ENCODE measurements at regions of chr12 and their contacts with region 1.

Region 1: DNA sequence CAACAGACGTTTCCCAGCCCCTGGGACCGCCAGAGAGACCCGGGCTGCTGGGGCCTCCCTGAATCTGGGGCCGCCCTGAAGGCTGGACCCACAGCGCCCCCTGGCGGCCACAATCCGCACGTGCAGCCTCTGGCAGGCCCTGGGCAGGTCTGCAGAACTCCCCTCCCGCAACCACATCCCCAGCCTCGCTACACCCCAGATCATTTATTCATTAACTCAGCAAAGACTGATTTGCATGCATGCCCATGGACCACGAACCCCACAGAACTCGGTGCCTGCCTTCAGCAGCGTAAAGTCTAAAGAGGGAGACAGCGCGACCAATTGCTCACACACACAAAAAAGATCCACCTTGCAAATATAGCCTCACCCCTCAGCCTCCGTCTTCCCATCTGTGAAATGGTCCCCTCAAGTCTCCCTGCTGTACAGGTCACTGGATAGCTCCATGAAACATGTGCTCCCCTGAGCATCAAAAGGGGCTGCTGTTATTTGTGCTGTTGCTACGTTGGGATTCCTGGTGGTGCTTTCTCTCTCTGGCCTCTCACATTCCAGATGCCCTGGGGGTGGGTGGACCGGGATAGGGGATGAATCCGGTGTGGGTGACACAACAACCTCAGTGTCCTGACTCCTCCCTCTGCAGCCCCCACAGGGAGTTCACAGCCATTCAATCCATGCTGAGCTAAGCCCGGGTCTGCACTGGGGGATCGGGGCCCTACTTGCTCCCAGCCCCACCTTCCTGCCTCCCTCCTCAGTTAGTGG is 96.4 kb downstream of the SCARB1 start:
- DNase-seq: peak; percentile 58
- H3K4me3 ChIP-seq: no peak overlapping the region
- H3K27ac ChIP-seq: no peak overlapping the region
- H3K4me1 ChIP-seq: no peaks in the 10 kb centered on the region
- H3K27me3 ChIP-seq: no peaks in the 10 kb centered on the region
- CTCF ChIP-seq: peak; percentile 95 to 96
- POLR2A ChIP-seq: no peak

Region 2: DNA sequence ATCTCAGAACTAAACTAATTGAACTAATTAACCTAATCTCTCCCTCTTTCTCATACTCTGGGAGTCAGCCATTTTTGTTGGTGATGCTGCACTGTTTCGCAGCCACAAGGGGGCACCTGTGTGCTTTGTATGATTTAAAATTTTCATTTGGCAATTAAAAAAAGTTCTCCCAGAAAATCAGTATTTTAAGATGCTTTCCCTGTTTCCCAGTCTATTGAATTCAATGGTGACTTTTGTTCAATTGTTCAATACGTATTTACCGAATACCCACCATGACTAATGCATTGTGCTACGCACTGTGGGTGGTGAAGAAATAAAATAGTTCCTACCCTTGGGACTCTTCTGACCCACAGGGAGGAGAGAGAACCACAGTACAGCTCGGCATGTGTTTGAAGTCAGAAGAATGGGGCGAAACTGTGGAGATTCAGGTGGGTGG is 730.6 kb before region 1 on chr12:
- CTCF ChIA-PET with region 1: interaction called, 35 read pairs
- POLR2A ChIA-PET with region 1: no interaction called
- dilution Hi-C with region 1: no loop called
- intact Hi-C with region 1: loop called (anchors 1 kb)
- DNase-seq: peak; percentile 60
- H3K4me3 ChIP-seq: no peak overlapping the region
- H3K27ac ChIP-seq: no peak overlapping the region
- H3K4me1 ChIP-seq: peaks cover 6% of the 10 kb centered on the region
- H3K27me3 ChIP-seq: peaks cover 0 to 3% of the 10 kb centered on the region in 2 experiments
- CTCF ChIP-seq: peak; percentile 75 to 81
- POLR2A ChIP-seq: no peak

Region 3: GRCh38 chr12:124347716-124348357 is 419.4 kb before region 1 on chr12:
- CTCF ChIA-PET with region 1: interaction called, 13 read pairs
- POLR2A ChIA-PET with region 1: no interaction called
- dilution Hi-C with region 1: no loop called
- intact Hi-C with region 1: loop called (anchors 2 kb)
- DNase-seq: no peak
- H3K4me3 ChIP-seq: no peak overlapping the region
- H3K27ac ChIP-seq: no peak overlapping the region
- H3K4me1 ChIP-seq: peaks cover 3% of the 10 kb centered on the region
- H3K27me3 ChIP-seq: no peaks in the 10 kb centered on the region
- CTCF ChIP-seq: peak; percentile 57 to 58
- POLR2A ChIP-seq: no peak

Region 4: GRCh38 chr12:124379938-124380754 is 387.1 kb before region 1 on chr12:
- CTCF ChIA-PET with region 1: interaction called, 10 read pairs
- POLR2A ChIA-PET with region 1: no interaction called
- dilution Hi-C with region 1: no loop called
- intact Hi-C with region 1: loop called (anchors 1 kb)
- DNase-seq: peak; percentile 93
- H3K4me3 ChIP-seq: no peak overlapping the region
- H3K27ac ChIP-seq: peak overlapping the region; percentile 93
- H3K4me1 ChIP-seq: peaks cover 62% of the 10 kb centered on the region
- H3K27me3 ChIP-seq: no peaks in the 10 kb centered on the region
- CTCF ChIP-seq: peak; percentile 43 to 54
- POLR2A ChIP-seq: peak; percentile 80

Region 5: GRCh38 chr12:124518051-124518932 is 249.0 kb before region 1 on chr12:
- CTCF ChIA-PET with region 1: interaction called, 9 read pairs
- POLR2A ChIA-PET with region 1: no interaction called
- dilution Hi-C with region 1: no loop called
- intact Hi-C with region 1: loop called (anchors 5 kb)
- DNase-seq: peak; percentile 99
- H3K4me3 ChIP-seq: peak overlapping the region in 1 of 3 experiments; percentile 19
- H3K27ac ChIP-seq: peak overlapping the region; percentile 91
- H3K4me1 ChIP-seq: peaks cover 64% of the 10 kb centered on the region
- H3K27me3 ChIP-seq: no peaks in the 10 kb centered on the region
- CTCF ChIP-seq: no peak
- POLR2A ChIP-seq: no peak

Region 6: DNA sequence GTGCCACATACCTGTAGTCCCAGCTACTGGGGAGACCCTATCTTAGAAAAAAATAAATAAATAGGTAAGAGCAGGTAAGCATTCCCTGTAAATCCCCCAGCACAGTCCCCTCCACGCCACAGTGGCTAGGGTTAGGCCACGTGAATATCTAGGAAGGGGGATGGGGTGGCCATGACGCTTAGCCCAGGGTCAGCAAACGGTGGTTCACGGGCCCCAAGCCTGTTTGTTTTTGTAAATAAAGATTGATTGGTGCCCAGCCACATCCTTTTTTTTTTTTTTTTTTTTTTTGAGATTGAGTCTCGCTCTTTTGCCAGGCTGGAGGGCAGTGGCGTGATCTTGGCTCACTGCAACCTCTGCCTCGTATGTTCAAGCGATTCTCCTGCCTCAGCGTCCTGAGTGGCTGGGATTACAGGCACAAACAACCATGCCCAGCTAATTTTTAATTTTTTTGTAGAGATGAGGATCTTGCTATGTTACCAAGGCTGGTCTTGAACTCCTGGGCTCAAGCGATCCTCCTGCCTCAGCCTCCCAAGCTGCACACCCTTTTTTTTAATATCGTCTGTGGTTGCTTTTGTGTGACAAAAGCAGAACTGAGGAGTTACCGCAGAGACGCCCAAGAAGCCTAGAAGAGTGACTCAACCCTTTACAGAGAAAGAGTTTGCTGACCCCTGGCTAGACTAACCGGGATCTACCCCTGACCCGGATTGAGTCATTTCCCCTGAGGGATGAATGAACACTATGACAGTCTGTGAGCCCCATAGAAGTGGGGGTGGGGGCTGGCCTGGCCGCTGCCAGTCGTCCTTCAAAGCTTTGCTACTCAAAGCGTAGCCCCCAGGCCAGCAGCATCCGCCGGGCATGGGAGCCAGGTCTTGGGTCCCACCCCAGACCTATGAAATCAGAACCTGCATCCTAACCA is 86.1 kb before region 1 on chr12:
- CTCF ChIA-PET with region 1: interaction called, 5 read pairs
- POLR2A ChIA-PET with region 1: no interaction called
- dilution Hi-C with region 1: no loop called
- intact Hi-C with region 1: loop called (anchors 1 kb)
- DNase-seq: peak; percentile 94
- H3K4me3 ChIP-seq: no peak overlapping the region
- H3K27ac ChIP-seq: peak overlapping the region; percentile 98
- H3K4me1 ChIP-seq: peaks cover 41% of the 10 kb centered on the region
- H3K27me3 ChIP-seq: no peaks in the 10 kb centered on the region
- CTCF ChIP-seq: peak; percentile 28 to 39
- POLR2A ChIP-seq: peak; percentile 54

Region 7: GRCh38 chr12:124740691-124741137 is 26.5 kb before region 1 on chr12:
- CTCF ChIA-PET with region 1: interaction called, 17 read pairs
- POLR2A ChIA-PET with region 1: no interaction called
- dilution Hi-C with region 1: no loop called
- intact Hi-C with region 1: loop called (anchors 1 kb)
- DNase-seq: peak; percentile 87
- H3K4me3 ChIP-seq: no peak overlapping the region
- H3K27ac ChIP-seq: peak overlapping the region; percentile 88
- H3K4me1 ChIP-seq: peaks cover 42% of the 10 kb centered on the region
- H3K27me3 ChIP-seq: no peaks in the 10 kb centered on the region
- CTCF ChIP-seq: peak; percentile 7 to 13
- POLR2A ChIP-seq: no peak

Region 8: GRCh38 chr12:125081427-125081826 is 314.2 kb after region 1 on chr12:
- CTCF ChIA-PET with region 1: no interaction called
- POLR2A ChIA-PET with region 1: no interaction called
- dilution Hi-C with region 1: no loop called
- intact Hi-C with region 1: no loop called
- DNase-seq: no peak
- H3K4me3 ChIP-seq: no peak overlapping the region
- H3K27ac ChIP-seq: no peak overlapping the region
- H3K4me1 ChIP-seq: no peaks in the 10 kb centered on the region
- H3K27me3 ChIP-seq: no peaks in the 10 kb centered on the region
- CTCF ChIP-seq: no peak
- POLR2A ChIP-seq: no peak

Measured in endothelial cell of umbilical vein (primary cell).